ENCODE measurements at regions of chr19 and their contacts with region 1.

Region 1: DNA sequence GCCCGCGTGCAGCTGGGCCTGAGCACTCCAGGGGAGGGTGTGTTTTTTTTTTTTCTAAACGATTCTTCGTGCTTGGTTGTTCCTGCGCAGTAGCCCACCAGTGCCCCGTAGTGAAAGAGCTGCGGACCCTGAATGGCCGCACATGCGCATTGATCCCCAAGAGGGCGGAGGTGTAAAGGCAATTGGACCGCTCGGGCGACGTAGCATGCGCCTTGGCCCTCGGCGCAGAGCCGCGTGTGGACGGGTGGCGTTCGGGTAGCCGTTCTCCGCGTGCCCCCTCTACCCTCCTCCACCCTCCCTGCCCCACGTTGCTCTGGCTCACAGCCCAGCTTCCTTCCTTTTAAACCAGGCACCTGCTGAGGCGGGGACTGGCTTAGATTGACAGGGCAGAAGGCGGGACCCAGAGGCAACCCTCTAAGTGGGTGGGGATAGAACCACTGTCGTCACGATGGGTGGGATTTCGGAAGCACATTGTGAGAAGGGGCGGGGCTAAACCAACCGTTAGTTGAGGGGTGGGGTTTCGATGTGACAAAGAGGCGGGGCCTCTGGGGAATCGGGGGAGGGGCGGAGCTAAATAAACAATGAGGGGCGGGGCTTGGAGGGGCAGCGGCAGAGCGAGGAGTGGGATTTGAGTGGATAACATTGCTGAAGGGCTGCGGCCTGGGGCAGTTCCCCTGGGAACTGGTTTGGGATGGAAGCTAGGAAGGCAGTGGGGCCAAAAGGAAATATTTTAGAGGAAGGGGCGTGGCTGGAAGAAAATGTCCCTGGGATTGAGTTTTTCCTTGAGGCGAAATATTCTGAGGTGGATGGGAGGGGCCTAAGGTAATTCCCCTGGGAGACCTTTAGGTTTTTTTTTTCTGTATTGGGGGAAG is 543 bp upstream of the NUP62 start:
- DNase-seq: peak; percentile 89
- H3K4me3 Mint-ChIP-seq: peak overlapping the region; percentile 97
- H3K27ac Mint-ChIP-seq: peak overlapping the region; percentile 100
- H3K4me1 Mint-ChIP-seq: peaks cover 49% of the 10 kb centered on the region
- H3K27me3 Mint-ChIP-seq: peaks cover 2% of the 10 kb centered on the region

Region 2: DNA sequence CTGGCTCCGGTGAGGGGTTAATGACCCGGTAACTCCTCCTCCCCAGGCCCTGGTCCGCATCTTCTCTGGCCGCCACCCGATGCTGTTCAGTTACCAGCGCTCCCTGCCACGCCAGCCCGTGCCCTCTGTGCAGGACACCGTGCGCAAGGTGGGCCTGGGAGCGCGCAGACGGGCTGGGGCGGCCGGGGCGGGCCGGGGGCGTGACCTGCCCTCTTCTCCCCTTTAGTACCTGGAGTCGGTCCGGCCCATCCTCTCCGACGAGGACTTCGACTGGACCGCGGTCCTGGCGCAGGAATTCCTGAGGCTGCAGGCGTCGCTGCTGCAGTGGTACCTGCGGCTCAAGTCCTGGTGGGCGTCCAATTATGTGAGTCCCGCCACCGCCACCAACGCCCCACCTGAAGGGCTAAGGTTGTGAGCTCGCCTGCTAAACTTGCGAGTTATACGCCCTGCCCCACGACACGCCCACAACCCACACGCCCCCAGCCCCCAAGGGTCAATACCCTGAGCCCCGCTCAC is 228.5 kb before region 1 on chr19:
- intact Hi-C with region 1: no loop called
- DNase-seq: no peak
- H3K4me3 Mint-ChIP-seq: no peak overlapping the region
- H3K27ac Mint-ChIP-seq: no peak overlapping the region
- H3K4me1 Mint-ChIP-seq: no peaks in the 10 kb centered on the region
- H3K27me3 Mint-ChIP-seq: peaks cover 6% of the 10 kb centered on the region

Region 3: DNA sequence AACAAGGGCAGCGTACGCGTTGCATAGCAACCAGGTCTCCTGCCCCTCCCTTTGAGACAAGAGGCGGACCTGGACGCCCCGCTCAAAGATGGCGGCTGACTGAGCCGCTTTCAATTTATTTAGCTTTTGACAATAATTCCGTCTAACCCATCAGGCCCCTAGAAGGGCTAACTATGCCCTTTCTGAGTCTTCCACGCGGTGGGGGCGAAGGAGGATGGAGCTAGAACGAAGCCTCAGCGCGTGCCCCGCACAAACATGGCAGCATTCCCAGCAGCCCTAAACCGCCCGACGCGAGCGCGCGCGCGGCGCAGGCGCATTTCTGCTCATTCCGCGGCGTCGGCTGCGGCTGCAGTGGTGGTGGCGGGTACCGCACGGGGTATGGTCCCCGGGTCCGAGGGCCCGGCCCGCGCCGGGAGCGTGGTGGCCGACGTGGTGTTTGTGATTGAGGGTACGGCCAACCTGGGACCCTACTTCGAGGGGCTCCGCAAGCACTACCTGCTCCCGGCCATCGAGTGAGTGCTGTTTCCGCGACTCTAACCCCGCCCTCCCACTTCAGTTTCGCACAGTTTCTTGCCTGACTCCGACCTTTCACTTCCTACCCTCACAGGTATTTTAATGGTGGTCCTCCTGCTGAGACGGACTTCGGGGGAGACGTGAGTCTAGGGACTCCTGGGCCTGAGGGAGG is 111.7 kb before region 1 on chr19 and contains the start of gene MED25:
- intact Hi-C with region 1: loop called (anchors 1 kb)
- DNase-seq: peak; percentile 88
- H3K4me3 Mint-ChIP-seq: peak within 1 kb of the TSS; percentile 94
- H3K27ac Mint-ChIP-seq: peak within 1 kb of the TSS; percentile 93
- H3K4me1 Mint-ChIP-seq: peaks cover 25% of the 10 kb centered on the region
- H3K27me3 Mint-ChIP-seq: no peaks in the 10 kb centered on the region
- total RNA-seq, gene MED25: 54.2 and 54.5 TPM in 2 replicates

Region 4: GRCh38 chr19:49869441-49870176 is 60.2 kb before region 1 on chr19:
- intact Hi-C with region 1: loop called (anchors 1 kb)
- DNase-seq: peak; percentile 92
- H3K4me3 Mint-ChIP-seq: no peak overlapping the region
- H3K27ac Mint-ChIP-seq: no peak overlapping the region
- H3K4me1 Mint-ChIP-seq: peaks cover 36% of the 10 kb centered on the region
- H3K27me3 Mint-ChIP-seq: no peaks in the 10 kb centered on the region

Region 5: DNA sequence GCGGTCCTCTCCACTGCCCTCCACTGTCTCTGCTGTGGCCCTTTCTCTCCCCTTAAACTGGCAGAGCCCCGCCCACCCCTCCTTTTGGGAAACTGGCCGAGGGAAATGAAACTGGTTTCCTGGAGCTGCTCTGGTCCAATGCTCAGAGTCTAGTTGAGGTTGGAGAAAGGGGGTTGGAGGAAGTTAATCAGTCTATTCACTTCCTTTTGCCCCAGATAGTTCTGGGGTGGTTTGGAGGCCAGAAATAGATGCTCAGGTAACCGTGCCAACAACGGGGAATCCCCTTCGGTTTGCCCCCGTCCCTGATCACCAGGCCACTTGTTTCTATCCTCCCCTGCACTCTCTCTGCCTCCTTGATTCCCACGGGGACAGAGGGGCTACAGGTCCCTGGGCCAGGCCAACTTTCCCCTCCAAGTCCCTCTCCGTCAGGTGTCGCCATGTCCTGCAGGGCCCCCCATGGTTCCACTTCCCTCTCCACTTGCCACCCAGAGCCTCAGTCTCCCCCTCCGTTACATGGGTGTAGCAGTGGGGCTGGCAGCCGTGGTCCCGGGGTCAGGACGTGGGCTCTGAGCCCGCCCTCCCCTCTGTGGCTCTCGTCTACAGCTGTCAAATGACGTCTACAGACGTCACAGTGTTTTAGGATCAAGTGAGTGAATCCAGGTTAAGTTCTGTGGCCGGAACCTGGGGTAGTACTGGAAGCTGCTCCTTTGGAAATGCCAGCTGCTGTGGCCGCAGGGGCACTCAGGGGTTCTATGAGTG is 32.8 kb before region 1 on chr19 and contains the start of gene IL4I1:
- intact Hi-C with region 1: loop called (anchors 1 kb)
- DNase-seq: peak; percentile 54
- H3K4me3 Mint-ChIP-seq: peak within 1 kb of the TSS; percentile 83
- H3K27ac Mint-ChIP-seq: peak within 1 kb of the TSS; percentile 99
- H3K4me1 Mint-ChIP-seq: peaks cover 41% of the 10 kb centered on the region
- H3K27me3 Mint-ChIP-seq: peaks cover 1% of the 10 kb centered on the region
- total RNA-seq, gene IL4I1: 50.0 and 51.5 TPM in 2 replicates

Region 6: DNA sequence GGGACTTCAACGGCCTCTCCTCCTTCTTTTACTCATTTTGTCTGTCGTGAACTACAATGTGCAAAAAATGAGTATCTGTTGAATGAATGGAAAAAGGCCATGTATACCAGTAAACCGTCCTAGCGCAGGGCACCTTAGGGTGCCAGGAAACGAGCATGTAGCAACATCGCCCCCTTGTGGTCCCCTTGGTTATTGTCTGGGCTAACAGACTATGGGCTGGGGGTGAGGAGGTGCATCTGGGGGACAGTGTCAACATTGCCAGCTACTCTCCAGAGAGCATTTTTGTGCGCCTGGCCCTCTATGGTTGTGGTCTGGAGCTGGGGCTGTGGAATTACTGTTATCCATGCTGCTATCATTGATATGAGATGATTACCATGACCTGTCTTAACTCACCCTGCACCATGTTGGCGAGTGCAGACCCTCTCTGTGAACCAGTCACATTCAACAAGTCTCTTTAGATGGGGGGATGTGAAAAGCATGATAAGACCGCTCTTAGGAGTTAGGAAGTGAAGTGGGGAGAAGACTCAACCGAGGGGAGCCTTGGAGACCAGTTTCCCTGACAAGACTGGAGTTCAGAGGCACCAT is 53.9 kb after region 1 on chr19:
- intact Hi-C with region 1: loop called (anchors 2 kb)
- DNase-seq: peak; percentile 61
- H3K4me3 Mint-ChIP-seq: no peak overlapping the region
- H3K27ac Mint-ChIP-seq: no peak overlapping the region
- H3K4me1 Mint-ChIP-seq: peaks cover 13% of the 10 kb centered on the region
- H3K27me3 Mint-ChIP-seq: no peaks in the 10 kb centered on the region